Mammary epithelial cell (primary cell): ENCODE measurements at regions of chr6 and their contacts with region 1.

Region 1: DNA sequence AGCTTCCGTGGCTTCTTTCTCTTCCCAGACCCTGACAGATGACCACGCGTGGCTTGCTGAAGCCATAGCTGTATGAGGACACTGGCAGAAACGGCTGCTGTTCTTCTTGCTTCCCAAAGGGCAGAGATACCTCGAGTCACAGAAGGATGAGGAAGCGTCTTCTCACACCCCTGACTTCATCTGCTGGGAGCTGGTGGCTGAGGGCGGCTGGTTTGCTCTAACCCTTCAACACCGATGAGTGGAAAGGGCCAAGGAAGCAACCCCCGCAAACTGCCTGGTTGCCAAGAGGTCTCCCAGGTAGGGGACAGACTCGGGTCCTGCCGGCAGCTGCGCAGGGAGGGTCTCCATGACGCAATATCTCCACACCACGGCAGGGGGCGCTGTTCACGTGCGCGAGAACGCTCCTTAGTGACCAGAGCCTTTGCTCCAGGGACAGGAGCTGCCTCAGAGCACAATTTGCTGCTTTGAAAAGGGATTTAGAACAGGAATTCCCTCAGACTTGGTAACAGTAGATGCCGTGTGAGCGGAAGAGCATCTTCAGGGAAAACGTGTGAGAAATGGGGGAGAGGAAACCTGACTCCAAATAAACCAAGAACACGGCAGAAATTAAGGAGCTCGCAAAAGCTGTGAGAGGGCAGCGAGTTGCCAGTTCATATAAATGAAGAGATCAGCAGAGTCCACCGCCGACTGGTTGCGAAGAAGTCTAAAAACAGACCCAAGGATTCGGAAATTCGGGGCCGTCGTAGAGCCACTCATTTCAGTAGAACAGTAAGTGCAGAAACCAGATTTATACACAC is 80.2 kb downstream of the ERMARD start:
- DNase-seq: peak; percentile 40
- H3K4me3 ChIP-seq: no peak overlapping the region
- H3K27ac ChIP-seq: no peak overlapping the region
- H3K4me1 ChIP-seq: peaks cover 20% of the 10 kb centered on the region
- H3K27me3 ChIP-seq: no peaks in the 10 kb centered on the region
- CTCF ChIP-seq: peak; percentile 89 to 90

Region 2: GRCh38 chr6:169789982-169790927 is 41.4 kb before region 1 on chr6:
- CTCF ChIA-PET with region 1: no interaction called
- dilution Hi-C with region 1: no loop called
- in situ Hi-C with region 1: no loop called
- intact Hi-C with region 1: loop called (anchors 1 kb)
- DNase-seq: peak; percentile 72
- H3K4me3 ChIP-seq: peak overlapping the region; percentile 56 to 57 (median 56)
- H3K27ac ChIP-seq: no peak overlapping the region
- H3K4me1 ChIP-seq: peaks cover 17% of the 10 kb centered on the region
- H3K27me3 ChIP-seq: no peaks in the 10 kb centered on the region
- CTCF ChIP-seq: peak; percentile 98 to 99

Region 3: GRCh38 chr6:170114956-170115855 is 283.6 kb after region 1 on chr6:
- CTCF ChIA-PET with region 1: no interaction called
- dilution Hi-C with region 1: loop called (anchors 25 kb)
- in situ Hi-C with region 1: no loop called
- intact Hi-C with region 1: no loop called
- DNase-seq: no peak
- H3K4me3 ChIP-seq: no peak overlapping the region
- H3K27ac ChIP-seq: no peak overlapping the region
- H3K4me1 ChIP-seq: no peaks in the 10 kb centered on the region
- H3K27me3 ChIP-seq: no peaks in the 10 kb centered on the region
- CTCF ChIP-seq: no peak

Region 4: GRCh38 chr6:170130201-170130621 is 298.6 kb after region 1 on chr6:
- CTCF ChIA-PET with region 1: no interaction called
- dilution Hi-C with region 1: no loop called
- in situ Hi-C with region 1: no loop called
- intact Hi-C with region 1: no loop called
- DNase-seq: no peak
- H3K4me3 ChIP-seq: no peak overlapping the region
- H3K27ac ChIP-seq: no peak overlapping the region
- H3K4me1 ChIP-seq: peaks cover 7% of the 10 kb centered on the region
- H3K27me3 ChIP-seq: no peaks in the 10 kb centered on the region
- CTCF ChIP-seq: no peak

Region 5: GRCh38 chr6:170244721-170245474 is 413.2 kb after region 1 on chr6:
- CTCF ChIA-PET with region 1: no interaction called
- dilution Hi-C with region 1: no loop called
- in situ Hi-C with region 1: no loop called
- intact Hi-C with region 1: loop called (anchors 5 kb)
- DNase-seq: no peak
- H3K4me3 ChIP-seq: no peak overlapping the region
- H3K27ac ChIP-seq: no peak overlapping the region
- H3K4me1 ChIP-seq: no peaks in the 10 kb centered on the region
- H3K27me3 ChIP-seq: no peaks in the 10 kb centered on the region
- CTCF ChIP-seq: no peak

Region 6: GRCh38 chr6:170306324-170307079 is 474.9 kb after region 1 on chr6 and contains the start of gene FAM120B:
- CTCF ChIA-PET with region 1: no interaction called
- dilution Hi-C with region 1: no loop called
- in situ Hi-C with region 1: no loop called
- intact Hi-C with region 1: loop called (anchors 5 kb)
- DNase-seq: peak; percentile 93
- H3K4me3 ChIP-seq: peak within 1 kb of the TSS; percentile 72 to 98 (median 98)
- H3K27ac ChIP-seq: peak within 1 kb of the TSS; percentile 78
- H3K4me1 ChIP-seq: peaks cover 22% of the 10 kb centered on the region
- H3K27me3 ChIP-seq: no peaks in the 10 kb centered on the region
- CTCF ChIP-seq: no peak
- total RNA-seq, gene FAM120B: 27.3 to 29.7 TPM

Region 7: GRCh38 chr6:170529839-170530469 is 698.3 kb after region 1 on chr6:
- CTCF ChIA-PET with region 1: no interaction called
- dilution Hi-C with region 1: no loop called
- in situ Hi-C with region 1: no loop called
- intact Hi-C with region 1: loop called (anchors 1 kb)
- DNase-seq: peak; percentile 48
- H3K4me3 ChIP-seq: no peak overlapping the region
- H3K27ac ChIP-seq: no peak overlapping the region
- H3K4me1 ChIP-seq: no peaks in the 10 kb centered on the region
- H3K27me3 ChIP-seq: no peaks in the 10 kb centered on the region
- CTCF ChIP-seq: peak; percentile 90 to 96